ENCODE measurements at regions of chr10 and their contacts with region 1.

Region 1: GRCh38 chr10:63465293-63466143 is at the start of gene JMJD1C:
- DNase-seq: peak; percentile 92
- H3K4me3 Mint-ChIP-seq: peak within 1 kb of the TSS; percentile 99
- H3K27ac Mint-ChIP-seq: peak within 1 kb of the TSS; percentile 92
- H3K4me1 Mint-ChIP-seq: peaks cover 32% of the 10 kb centered on the region
- H3K27me3 Mint-ChIP-seq: no peaks in the 10 kb centered on the region
- CTCF ChIP-seq: no peak
- total RNA-seq, gene JMJD1C: 67.6 and 73.1 TPM in 2 replicates

Region 2: GRCh38 chr10:63217120-63217605 is 248.4 kb before region 1 on chr10:
- CTCF ChIA-PET with region 1: no interaction called
- intact Hi-C with region 1: loop called (anchors 5 kb)
- DNase-seq: peak; percentile 31
- H3K4me3 Mint-ChIP-seq: no peak overlapping the region
- H3K27ac Mint-ChIP-seq: no peak overlapping the region
- H3K4me1 Mint-ChIP-seq: peaks cover 53% of the 10 kb centered on the region
- H3K27me3 Mint-ChIP-seq: no peaks in the 10 kb centered on the region
- CTCF ChIP-seq: peak; percentile 49

Region 3: GRCh38 chr10:63521416-63522276 is 56.1 kb after region 1 on chr10:
- CTCF ChIA-PET with region 1: no interaction called
- intact Hi-C with region 1: loop called (anchors 2 kb)
- DNase-seq: peak; percentile 66
- H3K4me3 Mint-ChIP-seq: peak overlapping the region; percentile 76
- H3K27ac Mint-ChIP-seq: peak overlapping the region; percentile 86
- H3K4me1 Mint-ChIP-seq: peaks cover 50% of the 10 kb centered on the region
- H3K27me3 Mint-ChIP-seq: no peaks in the 10 kb centered on the region
- CTCF ChIP-seq: no peak

Region 4: GRCh38 chr10:63534723-63535122 is 69.2 kb after region 1 on chr10:
- CTCF ChIA-PET with region 1: no interaction called
- intact Hi-C with region 1: no loop called
- DNase-seq: no peak
- H3K4me3 Mint-ChIP-seq: no peak overlapping the region
- H3K27ac Mint-ChIP-seq: no peak overlapping the region
- H3K4me1 Mint-ChIP-seq: peaks cover 40% of the 10 kb centered on the region
- H3K27me3 Mint-ChIP-seq: no peaks in the 10 kb centered on the region
- CTCF ChIP-seq: no peak

Region 5: DNA sequence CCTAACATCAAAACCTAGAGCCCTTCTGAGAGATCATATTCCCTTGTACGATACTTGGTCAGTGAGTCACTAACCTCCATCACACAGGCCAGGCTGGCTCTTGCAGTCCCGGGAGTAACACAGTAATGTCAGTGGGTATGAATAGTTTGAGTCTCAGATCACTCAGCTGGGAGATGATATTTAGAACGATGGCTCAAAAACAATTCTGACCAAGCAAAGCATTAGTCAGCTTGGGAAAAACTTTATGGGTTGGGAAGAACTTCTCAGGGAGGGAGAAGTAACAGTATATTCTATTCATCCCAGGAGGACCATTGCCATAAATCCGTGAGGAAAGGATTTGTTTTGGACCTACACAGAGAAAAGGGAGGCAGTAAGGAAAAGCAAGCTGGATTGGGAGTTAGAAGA is 234.7 kb after region 1 on chr10:
- CTCF ChIA-PET with region 1: no interaction called
- intact Hi-C with region 1: loop called (anchors 5 kb)
- DNase-seq: peak; percentile 56
- H3K4me3 Mint-ChIP-seq: no peak overlapping the region
- H3K27ac Mint-ChIP-seq: peak overlapping the region; percentile 84
- H3K4me1 Mint-ChIP-seq: peaks cover 82% of the 10 kb centered on the region
- H3K27me3 Mint-ChIP-seq: no peaks in the 10 kb centered on the region
- CTCF ChIP-seq: no peak

Measured in Calu3 (cell line).